Activated CD8-positive, alpha-beta T cell treated with anti-CD3 and anti-CD28 coated beads, Interleukin-2, amount 10 ng/mL, durations not matched to agents 7 days and 5 days (primary cell): ENCODE measurements at regions of chr22 and their contacts with region 1.

Region 1: DNA sequence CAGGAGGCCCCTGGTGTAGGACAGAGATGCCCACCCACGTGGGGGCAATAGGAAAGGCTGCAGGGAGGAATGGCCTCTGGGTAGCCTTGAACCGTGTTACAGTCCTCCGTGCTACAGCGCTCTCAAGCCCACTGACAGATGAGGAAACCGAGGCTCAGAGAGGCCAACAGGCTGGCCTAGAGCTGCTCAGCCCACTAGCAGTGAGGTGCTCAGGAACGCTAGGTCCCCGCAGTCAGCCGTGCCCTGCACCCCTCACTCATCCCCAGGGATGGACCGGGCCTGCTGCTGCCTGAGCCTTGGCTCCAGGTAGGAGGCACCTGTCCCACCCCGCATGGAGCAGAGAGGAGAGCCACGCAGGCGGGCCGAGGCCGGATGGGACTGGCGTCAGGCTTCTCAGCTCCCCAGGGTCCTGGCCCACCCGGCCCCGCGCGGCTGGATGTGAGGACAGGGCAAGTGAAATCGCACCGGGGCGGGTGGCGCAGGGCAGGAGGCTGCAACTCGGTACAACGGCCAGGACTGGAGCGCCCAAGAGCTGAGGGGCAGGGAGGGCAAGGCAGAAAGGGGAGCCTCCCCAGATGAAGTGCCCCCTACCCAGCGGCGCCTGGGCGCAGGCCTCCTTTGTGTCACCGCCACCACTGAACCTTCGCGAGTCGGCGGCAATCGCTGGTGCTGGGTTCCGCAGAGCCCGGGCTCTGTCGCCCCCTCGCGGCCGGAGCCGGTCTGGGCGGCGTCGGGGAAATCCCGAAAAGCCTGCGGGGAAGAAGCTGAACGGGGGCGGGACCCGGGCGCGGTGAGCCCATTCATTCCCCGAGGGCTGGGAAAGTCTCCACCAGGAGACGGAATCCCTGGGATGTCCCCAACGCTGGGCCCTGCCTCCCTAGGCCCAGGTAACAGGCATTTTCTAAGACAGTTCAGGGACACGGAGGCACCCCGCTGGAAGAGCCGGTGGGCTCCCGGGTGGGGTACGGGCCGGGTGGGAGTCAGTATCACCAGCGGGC is 8.4 kb upstream of the SLC2A11 start:
- DNase-seq: peak; percentile 89
- ATAC-seq: peak; percentile 88
- H3K4me3 Mint-ChIP-seq: no peak overlapping the region
- H3K27ac Mint-ChIP-seq: no peak overlapping the region
- H3K4me1 Mint-ChIP-seq: peaks cover 27% of the 10 kb centered on the region
- H3K27me3 Mint-ChIP-seq: peaks cover 14% of the 10 kb centered on the region

Region 2: DNA sequence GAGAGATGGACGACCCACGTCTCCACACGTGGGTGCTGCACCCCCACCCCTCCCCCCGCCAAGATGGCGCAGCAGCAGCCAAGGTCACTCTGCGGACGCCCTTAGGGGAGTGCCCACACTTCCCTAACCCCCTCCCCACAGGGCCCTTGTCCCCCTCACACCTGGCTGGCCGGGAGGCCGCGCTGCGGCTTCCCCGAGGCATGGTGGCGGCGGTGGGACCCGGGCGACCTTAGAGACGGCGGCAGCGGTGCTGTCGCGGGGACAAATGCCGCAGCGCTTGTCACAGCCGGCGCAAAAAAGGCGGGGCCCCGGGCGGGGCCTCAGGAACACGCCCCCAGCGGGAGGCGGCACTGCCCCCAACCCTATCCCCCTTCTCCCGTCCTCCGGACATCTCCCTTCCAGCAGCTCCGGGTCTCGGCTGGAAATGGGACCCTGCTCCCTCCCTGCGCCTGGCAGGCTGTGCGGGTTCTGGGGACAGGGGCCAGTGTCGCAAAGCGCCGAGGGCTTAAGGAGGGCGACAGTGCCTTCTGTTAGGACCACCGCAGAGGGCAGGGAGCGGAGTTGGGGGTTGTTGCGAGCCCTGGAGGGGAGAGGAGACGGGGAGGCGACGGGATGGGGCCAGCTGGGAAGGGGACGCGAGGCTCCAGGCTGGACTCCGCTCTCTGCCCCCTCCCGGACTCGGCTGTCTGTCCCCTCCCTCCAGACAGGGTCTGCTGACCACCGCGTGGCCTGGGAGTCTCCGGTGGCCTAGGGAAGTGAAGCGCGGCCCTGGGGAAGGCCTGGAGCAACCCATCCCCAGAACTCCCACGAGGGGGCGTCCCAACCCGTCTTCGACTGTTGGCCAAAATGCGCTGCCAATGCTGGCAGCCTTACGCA is 81.4 kb before region 1 on chr22 and contains the start of gene CHCHD10:
- CTCF ChIA-PET with region 1: interaction called, 23 read pairs
- POLR2A ChIA-PET with region 1: interaction called, 3 read pairs
- DNase-seq: peak; percentile 84
- ATAC-seq: peak; percentile 72
- H3K4me3 Mint-ChIP-seq: peak within 1 kb of the TSS; percentile 82
- H3K27ac Mint-ChIP-seq: peak within 1 kb of the TSS; percentile 79
- H3K4me1 Mint-ChIP-seq: peaks cover 59% of the 10 kb centered on the region
- H3K27me3 Mint-ChIP-seq: no peaks in the 10 kb centered on the region
- total RNA-seq, gene CHCHD10: 134 to 140 TPM

Region 3: DNA sequence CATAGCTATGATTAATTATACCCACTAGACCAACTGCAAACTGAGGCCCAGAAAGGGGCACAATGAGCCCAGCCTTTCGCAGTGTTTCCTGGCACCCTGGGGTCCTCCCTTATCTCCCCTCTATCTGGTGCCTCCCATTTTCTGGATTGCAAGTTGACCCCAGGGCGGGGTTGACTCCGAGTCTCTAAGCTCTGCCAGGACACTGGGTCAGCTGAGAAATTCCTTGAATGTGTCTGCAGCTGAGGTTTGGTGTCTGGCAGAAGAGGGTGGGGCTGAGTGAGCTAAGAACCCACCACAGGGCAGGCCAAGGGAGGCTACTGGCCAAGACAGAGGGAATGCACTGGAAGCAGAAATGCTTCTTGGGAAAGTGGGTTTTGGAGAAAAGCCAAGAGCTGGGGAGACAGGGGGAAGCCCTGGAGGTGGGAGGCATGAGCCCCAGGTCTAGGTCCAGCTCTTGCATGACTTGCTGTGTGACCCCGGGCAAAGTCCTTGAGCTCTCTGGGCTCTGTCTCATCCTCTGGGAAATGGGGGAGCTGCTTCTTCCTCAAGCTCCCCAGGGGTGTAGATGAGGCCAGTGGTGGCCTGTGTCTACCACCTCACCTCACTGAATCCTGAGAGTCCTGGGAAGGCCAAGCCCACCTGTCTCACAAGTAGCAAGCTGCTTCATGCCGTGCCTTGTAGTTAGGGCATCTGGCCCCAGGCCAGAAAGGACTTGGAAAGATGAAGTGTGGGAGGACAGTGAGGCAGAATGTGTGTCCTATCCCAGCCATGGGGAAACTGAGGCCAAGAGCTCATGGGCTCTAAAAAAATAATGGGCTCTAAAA is 74.4 kb before region 1 on chr22:
- CTCF ChIA-PET with region 1: interaction called, 23 read pairs
- POLR2A ChIA-PET with region 1: no interaction called
- DNase-seq: no peak
- ATAC-seq: no peak
- H3K4me3 Mint-ChIP-seq: no peak overlapping the region
- H3K27ac Mint-ChIP-seq: no peak overlapping the region
- H3K4me1 Mint-ChIP-seq: peaks cover 20% of the 10 kb centered on the region
- H3K27me3 Mint-ChIP-seq: peaks cover 8% of the 10 kb centered on the region

Region 4: DNA sequence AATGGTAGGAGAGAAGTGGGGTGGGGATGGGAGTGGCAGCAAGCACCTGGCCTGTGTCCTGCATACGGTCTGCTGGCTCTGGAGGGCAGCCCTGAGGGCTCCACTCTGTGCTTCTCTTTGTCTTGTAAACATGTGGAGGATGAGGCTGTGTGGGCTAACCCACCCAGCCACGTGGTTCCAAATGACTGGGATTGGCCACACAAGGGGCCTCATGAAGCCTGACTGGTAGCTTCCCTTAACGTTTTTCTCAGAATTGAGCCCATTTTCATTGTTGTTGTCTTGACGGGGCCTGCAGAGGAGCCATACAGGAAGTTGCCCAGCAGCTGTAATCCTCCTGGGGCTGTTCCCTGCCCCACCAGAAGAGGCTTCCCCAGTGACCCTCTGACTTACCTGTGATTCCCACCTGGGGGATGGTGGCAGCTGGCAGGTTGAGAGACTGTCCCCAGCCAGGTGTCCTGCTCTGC is 28.5 kb before region 1 on chr22:
- CTCF ChIA-PET with region 1: interaction called, 15 read pairs
- POLR2A ChIA-PET with region 1: no interaction called
- DNase-seq: peak; percentile 84
- ATAC-seq: peak; percentile 89
- H3K4me3 Mint-ChIP-seq: peak overlapping the region; percentile 41
- H3K27ac Mint-ChIP-seq: peak overlapping the region; percentile 97
- H3K4me1 Mint-ChIP-seq: peaks cover 58% of the 10 kb centered on the region
- H3K27me3 Mint-ChIP-seq: no peaks in the 10 kb centered on the region

Region 5: GRCh38 chr22:24101911-24102321 is 252.6 kb after region 1 on chr22:
- CTCF ChIA-PET with region 1: no interaction called
- POLR2A ChIA-PET with region 1: no interaction called
- DNase-seq: no peak
- ATAC-seq: no peak
- H3K4me3 Mint-ChIP-seq: no peak overlapping the region
- H3K27ac Mint-ChIP-seq: no peak overlapping the region
- H3K4me1 Mint-ChIP-seq: peaks cover 29% of the 10 kb centered on the region
- H3K27me3 Mint-ChIP-seq: no peaks in the 10 kb centered on the region